ENCODE measurements at regions of chr20 and their contacts with region 1.

Region 1: DNA sequence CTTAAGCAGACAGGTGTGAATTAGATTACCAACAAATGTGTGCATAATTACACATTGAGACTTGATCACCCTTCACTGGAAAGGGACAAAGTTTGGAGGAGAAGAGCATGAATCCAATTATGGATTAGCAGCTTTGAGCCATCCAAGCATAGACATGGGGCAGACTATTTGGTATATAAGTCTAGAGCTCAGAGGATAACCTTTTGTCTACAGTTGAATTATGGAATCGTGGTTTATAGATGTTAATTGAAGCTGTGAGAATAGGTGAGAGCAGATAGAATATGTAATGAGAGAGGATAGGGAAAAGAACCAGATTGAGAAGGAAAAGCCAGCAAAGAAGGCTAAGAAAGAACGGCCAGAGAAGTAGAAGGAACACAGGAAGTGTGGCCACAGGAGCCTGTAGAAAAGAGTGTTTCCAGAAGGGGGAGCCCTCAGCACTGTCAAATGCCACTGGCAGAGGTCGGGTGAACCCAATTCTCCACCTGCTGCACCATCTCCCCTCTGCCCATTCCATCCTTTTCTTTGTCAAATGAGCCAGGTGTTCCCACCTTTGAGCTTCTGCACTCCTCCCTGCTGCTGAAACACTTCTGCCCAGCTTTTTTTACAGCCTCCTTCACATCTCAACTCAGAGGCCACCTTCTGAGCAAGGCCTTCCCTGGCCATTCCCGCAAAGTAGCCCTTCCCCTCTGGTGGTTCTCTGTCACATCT is 7.3 kb downstream of the DNTTIP1 start:
- DNase-seq: peak; percentile 73
- CTCF ChIP-seq: peak; percentile 69

Region 2: DNA sequence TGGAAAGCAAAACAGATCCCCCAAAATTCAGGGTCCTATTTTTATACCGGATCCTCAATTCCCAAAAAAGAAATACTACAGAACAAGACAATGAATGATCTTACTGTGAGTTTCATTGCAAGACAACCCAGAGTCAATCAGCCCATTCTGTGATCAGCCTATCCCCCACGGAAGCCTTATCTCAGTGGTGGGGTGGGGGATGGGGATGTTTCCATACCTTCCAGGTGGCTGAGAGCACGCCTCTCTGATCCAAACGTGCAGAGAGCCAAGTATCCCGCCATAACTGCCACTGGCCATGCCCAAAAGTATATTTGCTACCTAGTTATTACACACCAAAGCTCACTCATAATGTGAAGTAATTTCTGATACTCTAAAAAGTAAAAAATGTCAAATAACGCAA is 314.4 kb before region 1 on chr20:
- CTCF ChIA-PET with region 1: no interaction called
- POLR2A ChIA-PET with region 1: no interaction called
- DNase-seq: no peak
- CTCF ChIP-seq: no peak

Region 3: GRCh38 chr20:45810191-45810970 is 11.3 kb after region 1 on chr20:
- CTCF ChIA-PET with region 1: interaction called, 22 read pairs
- POLR2A ChIA-PET with region 1: interaction called, 3 read pairs
- DNase-seq: no peak
- CTCF ChIP-seq: no peak

Region 4: GRCh38 chr20:45817652-45818194 is 18.6 kb after region 1 on chr20:
- CTCF ChIA-PET with region 1: interaction called, 19 read pairs
- POLR2A ChIA-PET with region 1: interaction called, 3 read pairs
- DNase-seq: no peak
- CTCF ChIP-seq: no peak

Region 5: DNA sequence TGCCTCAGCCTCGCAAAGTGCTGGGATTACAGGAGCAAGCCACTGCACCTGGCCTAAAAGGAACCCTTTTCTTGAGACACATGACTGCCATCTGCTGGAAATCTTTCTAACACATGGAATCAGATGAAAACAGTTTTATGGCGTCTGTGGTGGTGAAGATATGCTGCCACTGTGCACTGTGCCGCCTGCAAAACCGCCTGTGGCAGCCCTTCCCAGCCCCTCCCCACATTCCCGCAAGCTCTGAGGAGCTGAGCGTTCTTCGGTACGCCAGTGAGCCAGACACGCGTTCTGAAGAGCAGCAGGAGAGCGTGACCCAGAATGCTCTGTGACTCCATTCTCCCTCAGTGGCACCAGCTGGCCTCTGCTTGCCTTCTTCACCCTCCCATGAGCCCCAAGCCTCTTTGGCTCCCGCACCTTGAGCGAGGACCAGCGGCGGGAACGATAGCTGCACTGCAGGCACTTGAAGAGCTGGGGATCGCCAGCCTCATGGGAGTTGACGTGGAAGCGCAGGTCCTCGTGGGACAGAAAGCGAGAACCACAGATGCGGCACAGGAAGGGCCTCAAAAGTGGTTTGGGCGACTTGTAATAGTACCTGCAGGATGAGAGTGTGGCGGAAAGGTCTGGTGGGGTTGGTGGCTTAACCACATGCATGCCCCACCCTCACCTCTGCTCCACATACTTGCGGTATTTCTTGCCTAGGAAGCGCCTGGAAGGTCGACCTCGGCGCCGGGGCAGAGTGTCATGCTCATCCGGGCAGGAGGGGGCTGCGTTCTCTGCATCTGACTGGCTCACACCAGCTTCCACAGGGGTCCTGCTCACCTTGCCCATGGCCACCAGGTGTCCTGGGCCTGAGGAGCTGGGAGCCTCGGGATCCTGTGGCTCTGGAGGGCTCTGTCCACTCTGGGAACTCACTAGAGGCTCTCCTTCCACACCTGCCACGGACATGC is 164.2 kb after region 1 on chr20:
- CTCF ChIA-PET with region 1: interaction called, 27 read pairs
- POLR2A ChIA-PET with region 1: no interaction called
- DNase-seq: no peak
- CTCF ChIP-seq: peak; percentile 41

Measured in GM10248 (cell line).